Naive thymus-derived CD4-positive, alpha-beta T cell (primary cell): ENCODE measurements at regions of chr5 and their contacts with region 1.

Region 1: DNA sequence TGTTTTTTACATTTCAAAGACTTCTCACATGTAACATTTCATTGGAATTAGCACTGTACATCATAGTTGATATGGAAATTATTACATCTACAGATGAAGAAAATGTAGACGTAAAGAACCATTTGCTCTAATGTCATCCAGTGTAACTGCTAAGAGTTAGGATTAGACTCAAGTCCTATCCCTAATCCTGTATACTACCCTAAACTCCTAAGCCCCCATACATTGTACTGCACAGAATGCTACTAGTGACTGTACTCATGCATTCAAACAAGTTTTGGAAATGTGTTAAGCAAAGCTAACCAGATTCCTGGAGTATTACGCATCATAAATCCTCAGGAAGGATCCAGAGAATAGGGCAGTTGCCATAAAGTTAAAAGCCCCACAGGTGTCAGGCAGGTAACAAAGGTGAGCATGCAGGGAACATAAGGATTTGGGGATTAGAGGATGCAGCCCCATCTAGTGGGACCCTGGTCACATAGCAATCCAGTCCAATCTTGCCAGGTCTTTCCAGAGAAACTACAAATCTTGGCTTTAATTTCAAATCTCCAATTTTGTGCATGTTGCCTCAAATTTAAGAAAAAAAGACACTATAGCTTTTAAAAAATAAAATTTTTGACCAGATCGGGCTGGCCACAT is 32.0 kb downstream of the HAVCR1 start:
- DNase-seq: no peak
- ATAC-seq: no peak
- H3K4me3 ChIP-seq: no peak overlapping the region
- H3K4me3 Mint-ChIP-seq: peak overlapping the region in 1 of 10 donors; percentile 21
- H3K27ac ChIP-seq: no peak overlapping the region
- H3K27ac Mint-ChIP-seq: peak overlapping the region in 3 of 9 donors; percentile 41 to 89 (median 51)
- H3K4me1 ChIP-seq: peaks cover 16 to 23% of the 10 kb centered on the region in 2 donors
- H3K4me1 Mint-ChIP-seq: peaks cover 15 to 91% (median 30%) of the 10 kb centered on the region in 7 donors
- H3K27me3 ChIP-seq: no peaks in the 10 kb centered on the region
- H3K27me3 Mint-ChIP-seq: no peaks in the 10 kb centered on the region

Region 2: GRCh38 chr5:156893517-156893916 is 133.4 kb before region 1 on chr5:
- CTCF ChIA-PET with region 1: no interaction called
- POLR2A ChIA-PET with region 1: no interaction called
- intact Hi-C with region 1: loop called in 1 of 2 experiments (anchors 2 kb)
- DNase-seq: no peak
- ATAC-seq: no peak
- H3K4me3 ChIP-seq: no peak overlapping the region
- H3K4me3 Mint-ChIP-seq: peak overlapping the region in 5 of 10 donors; percentile 12 to 58 (median 19)
- H3K27ac ChIP-seq: no peak overlapping the region
- H3K27ac Mint-ChIP-seq: peak overlapping the region in 6 of 9 donors; percentile 2 to 93 (median 58)
- H3K4me1 ChIP-seq: peaks cover 0 to 15% of the 10 kb centered on the region in 2 donors
- H3K4me1 Mint-ChIP-seq: peaks cover 21 to 52% (median 32%) of the 10 kb centered on the region in 7 donors
- H3K27me3 ChIP-seq: no peaks in the 10 kb centered on the region
- H3K27me3 Mint-ChIP-seq: no peaks in the 10 kb centered on the region

Region 3: DNA sequence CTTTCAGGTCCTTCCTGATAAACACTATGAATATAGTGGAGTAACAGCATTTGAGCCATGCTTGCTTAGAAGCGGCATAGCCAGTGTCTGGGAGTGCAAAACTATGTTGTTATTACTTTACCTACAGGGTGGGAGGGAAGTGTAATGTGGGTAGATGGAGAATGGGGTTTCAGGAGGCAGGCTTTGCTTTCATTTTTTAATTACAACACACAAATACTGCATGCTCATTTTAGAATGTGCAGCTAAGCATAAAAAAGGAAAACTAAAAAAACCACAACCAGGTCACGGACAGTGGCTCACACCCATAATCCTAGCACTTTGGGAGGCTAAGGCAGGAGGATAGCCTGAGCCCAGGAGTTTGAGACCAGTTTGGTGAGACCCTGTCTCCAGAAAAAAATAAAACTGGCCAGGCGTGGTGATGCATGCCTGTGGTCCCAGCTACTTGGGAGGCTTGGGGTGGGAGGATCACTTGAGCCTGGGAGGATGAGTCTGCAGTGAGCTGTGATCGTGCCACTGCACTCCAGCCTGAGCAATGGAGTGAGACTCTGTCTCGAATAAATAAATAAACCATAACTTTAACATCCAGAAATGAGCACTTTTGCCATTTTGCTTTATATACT is 11.8 kb after region 1 on chr5:
- CTCF ChIA-PET with region 1: no interaction called
- POLR2A ChIA-PET with region 1: no interaction called
- intact Hi-C with region 1: loop called in 1 of 2 experiments (anchors 2 kb)
- DNase-seq: no peak
- ATAC-seq: no peak
- H3K4me3 ChIP-seq: no peak overlapping the region
- H3K4me3 Mint-ChIP-seq: peak overlapping the region in 5 of 10 donors; percentile 10 to 56 (median 21)
- H3K27ac ChIP-seq: no peak overlapping the region
- H3K27ac Mint-ChIP-seq: peak overlapping the region in 4 of 9 donors; percentile 32 to 78 (median 52)
- H3K4me1 ChIP-seq: peaks cover 6% of the 10 kb centered on the region in 2 donors
- H3K4me1 Mint-ChIP-seq: peaks cover 6 to 33% (median 16%) of the 10 kb centered on the region in 7 donors
- H3K27me3 ChIP-seq: no peaks in the 10 kb centered on the region
- H3K27me3 Mint-ChIP-seq: no peaks in the 10 kb centered on the region

Region 4: DNA sequence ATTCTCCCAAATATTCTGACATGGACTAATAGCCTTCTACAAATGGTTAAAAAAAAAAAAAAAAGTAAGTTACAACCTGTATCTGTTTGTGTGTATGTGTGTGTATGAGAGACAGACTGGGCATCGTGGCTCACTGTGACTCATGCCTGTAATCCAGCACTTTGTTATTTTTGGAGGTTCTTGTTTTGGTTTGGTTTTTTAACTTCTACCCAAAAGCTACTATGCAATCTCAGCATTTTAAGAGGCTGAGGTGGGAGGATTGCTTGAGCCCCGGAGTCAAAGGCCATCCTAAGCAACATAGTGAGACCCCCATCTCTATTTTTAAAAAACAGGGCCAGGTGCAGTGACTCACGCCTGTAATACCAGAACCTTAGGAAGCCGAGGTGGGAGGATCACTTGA is 49.7 kb after region 1 on chr5:
- CTCF ChIA-PET with region 1: no interaction called
- POLR2A ChIA-PET with region 1: no interaction called
- intact Hi-C with region 1: loop called in 1 of 2 experiments (anchors 2 kb)
- DNase-seq: no peak
- ATAC-seq: no peak
- H3K4me3 ChIP-seq: no peak overlapping the region
- H3K4me3 Mint-ChIP-seq: peak overlapping the region in 1 of 10 donors; percentile 23
- H3K27ac ChIP-seq: no peak overlapping the region
- H3K27ac Mint-ChIP-seq: peak overlapping the region in 1 of 9 donors; percentile 54
- H3K4me1 ChIP-seq: no peaks in the 10 kb centered on the region
- H3K4me1 Mint-ChIP-seq: peaks cover 0 to 48% (median 0%) of the 10 kb centered on the region in 7 donors
- H3K27me3 ChIP-seq: no peaks in the 10 kb centered on the region
- H3K27me3 Mint-ChIP-seq: no peaks in the 10 kb centered on the region

Region 5: DNA sequence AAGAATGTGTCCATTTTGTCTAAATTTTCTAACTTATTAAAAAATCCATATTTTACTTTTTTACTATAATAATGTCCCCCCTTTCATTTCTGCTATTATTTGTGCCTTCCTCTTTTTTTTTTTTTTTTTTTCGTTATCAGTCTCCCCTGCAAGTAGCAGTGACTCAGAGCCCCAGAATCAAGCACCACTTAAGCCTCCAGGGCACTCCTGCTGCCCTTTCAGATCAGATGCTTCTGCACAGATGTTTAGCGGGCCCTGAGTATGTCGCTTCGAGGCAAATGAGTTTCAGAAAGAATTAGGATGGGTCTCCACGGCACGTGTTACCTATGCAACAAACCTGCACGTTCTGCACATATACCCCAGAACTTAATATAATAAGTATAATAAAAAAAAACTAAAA is 104.0 kb after region 1 on chr5:
- CTCF ChIA-PET with region 1: interaction called, 4 read pairs
- POLR2A ChIA-PET with region 1: no interaction called
- intact Hi-C with region 1: loop called (anchors 2 to 5 kb)
- DNase-seq: no peak
- ATAC-seq: no peak
- H3K4me3 ChIP-seq: no peak overlapping the region
- H3K4me3 Mint-ChIP-seq: no peak overlapping the region
- H3K27ac ChIP-seq: no peak overlapping the region
- H3K27ac Mint-ChIP-seq: no peak overlapping the region
- H3K4me1 ChIP-seq: no peaks in the 10 kb centered on the region
- H3K4me1 Mint-ChIP-seq: peaks cover 6 to 46% (median 26%) of the 10 kb centered on the region in 7 donors
- H3K27me3 ChIP-seq: no peaks in the 10 kb centered on the region
- H3K27me3 Mint-ChIP-seq: no peaks in the 10 kb centered on the region

Region 6: GRCh38 chr5:157253547-157253946 is 226.6 kb after region 1 on chr5:
- CTCF ChIA-PET with region 1: no interaction called
- POLR2A ChIA-PET with region 1: no interaction called
- intact Hi-C with region 1: loop called in 1 of 2 experiments (anchors 10 kb)
- DNase-seq: no peak
- ATAC-seq: peak; percentile 44
- H3K4me3 ChIP-seq: peak overlapping the region; percentile 31
- H3K4me3 Mint-ChIP-seq: peak overlapping the region; percentile 62 to 79 (median 72)
- H3K27ac ChIP-seq: peak overlapping the region; percentile 66
- H3K27ac Mint-ChIP-seq: peak overlapping the region; percentile 86 to 98 (median 96)
- H3K4me1 ChIP-seq: peaks cover 93 to 97% of the 10 kb centered on the region in 2 donors
- H3K4me1 Mint-ChIP-seq: peaks cover 64 to 99% (median 94%) of the 10 kb centered on the region in 7 donors
- H3K27me3 ChIP-seq: no peaks in the 10 kb centered on the region
- H3K27me3 Mint-ChIP-seq: no peaks in the 10 kb centered on the region